Colonic mucosa (tissue), 4 donors: ENCODE measurements at regions of chr5 and their contacts with region 1.

Region 1: DNA sequence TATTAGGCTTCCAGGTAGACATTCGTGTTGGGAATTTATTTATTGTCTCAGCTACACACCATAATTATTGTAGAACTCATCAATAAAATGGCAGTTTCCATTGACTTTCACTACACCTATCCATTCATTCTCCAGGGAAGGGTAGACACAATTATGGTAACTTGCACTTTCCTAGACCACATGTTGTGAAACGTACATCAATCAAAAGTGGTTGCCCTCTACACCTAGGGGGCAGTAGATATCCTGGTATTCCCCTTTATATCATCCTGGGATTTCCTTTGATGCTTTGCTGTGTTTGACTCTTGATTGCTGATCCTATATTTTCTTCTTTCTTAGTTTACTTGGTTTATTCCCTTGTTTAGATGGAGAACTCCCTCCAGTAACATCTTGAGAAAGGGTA is 47.9 kb downstream of the ADGRV1 start:
- DNase-seq: no peak
- H3K4me3 ChIP-seq: no peak overlapping the region
- H3K27ac ChIP-seq: no peak overlapping the region
- H3K4me1 ChIP-seq: no peaks in the 10 kb centered on the region
- H3K27me3 ChIP-seq: no peaks in the 10 kb centered on the region
- CTCF ChIP-seq: peak; percentile 33

Region 2: DNA sequence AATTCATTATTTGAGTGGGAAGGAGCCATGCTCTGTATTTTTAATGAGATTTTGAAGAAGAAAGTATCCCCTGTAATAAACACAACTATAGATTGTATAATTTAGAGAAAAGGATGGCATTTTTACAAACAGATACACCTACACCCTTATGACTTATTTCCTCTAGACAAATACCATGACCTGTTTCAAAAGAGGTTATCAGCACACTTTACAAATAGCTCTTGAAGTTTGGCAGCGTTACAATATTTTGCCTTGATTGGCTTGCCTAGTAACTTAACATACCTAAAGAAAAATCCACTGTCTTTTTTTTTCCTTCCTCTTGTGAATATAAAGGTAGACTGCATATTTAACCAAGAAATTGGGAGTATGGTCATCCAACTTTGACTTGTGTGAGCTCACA is 168.4 kb before region 1 on chr5:
- intact Hi-C with region 1: loop called (anchors 5 kb)
- DNase-seq: no peak
- H3K4me3 ChIP-seq: no peak overlapping the region
- H3K27ac ChIP-seq: no peak overlapping the region
- H3K4me1 ChIP-seq: no peaks in the 10 kb centered on the region
- H3K27me3 ChIP-seq: no peaks in the 10 kb centered on the region
- CTCF ChIP-seq: no peak

Region 3: DNA sequence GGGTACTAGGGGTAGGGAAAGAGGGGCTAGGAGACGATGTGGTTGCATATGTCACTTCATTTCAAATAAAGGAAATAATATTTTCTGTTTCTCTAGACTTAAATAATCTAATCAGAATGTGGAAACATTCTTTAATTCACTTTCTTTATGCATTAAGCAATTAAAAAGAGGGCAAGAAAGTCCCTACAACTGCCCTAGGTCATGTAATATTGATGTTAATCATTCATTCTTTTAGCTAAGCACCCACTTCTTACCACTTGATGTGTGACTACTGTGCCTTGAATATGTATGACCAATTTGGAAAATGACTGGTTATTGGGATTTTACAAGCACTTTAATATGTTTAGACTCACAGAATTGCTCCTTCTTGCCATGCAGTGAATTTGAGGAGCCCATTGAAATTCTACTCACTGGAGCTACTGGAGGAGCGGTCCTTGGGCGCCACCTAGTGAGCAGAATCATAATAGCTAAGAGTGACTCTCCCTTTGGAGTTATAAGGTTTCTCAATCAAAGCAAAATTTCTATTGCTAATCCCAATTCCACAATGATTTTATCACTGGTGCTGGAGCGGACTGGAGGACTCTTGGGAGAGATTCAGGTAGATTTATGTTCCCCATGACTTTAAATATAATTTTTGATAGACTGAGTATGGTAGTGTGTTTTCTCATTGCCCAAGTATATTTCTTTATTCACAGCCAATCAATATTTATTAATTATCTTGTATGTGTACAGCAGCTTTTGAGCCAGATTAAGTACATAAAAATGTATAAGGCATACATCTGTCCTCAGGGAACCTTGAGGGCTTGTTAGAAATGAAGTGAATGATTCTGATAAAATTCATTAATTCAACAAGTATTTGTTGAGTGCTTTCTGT is 177.2 kb after region 1 on chr5:
- intact Hi-C with region 1: loop called (anchors 5 kb)
- DNase-seq: peak; percentile 75
- H3K4me3 ChIP-seq: no peak overlapping the region
- H3K27ac ChIP-seq: no peak overlapping the region
- H3K4me1 ChIP-seq: no peaks in the 10 kb centered on the region
- H3K27me3 ChIP-seq: no peaks in the 10 kb centered on the region
- CTCF ChIP-seq: peak; percentile 87